Sciatic nerve (tissue), 2 donors: ENCODE measurements at regions of chr18 and their contacts with region 1.

Region 1: GRCh38 chr18:77073336-77074093 is 59.1 kb downstream of the MBP start:
- DNase-seq: no peak
- ATAC-seq: no peak

Region 2: DNA sequence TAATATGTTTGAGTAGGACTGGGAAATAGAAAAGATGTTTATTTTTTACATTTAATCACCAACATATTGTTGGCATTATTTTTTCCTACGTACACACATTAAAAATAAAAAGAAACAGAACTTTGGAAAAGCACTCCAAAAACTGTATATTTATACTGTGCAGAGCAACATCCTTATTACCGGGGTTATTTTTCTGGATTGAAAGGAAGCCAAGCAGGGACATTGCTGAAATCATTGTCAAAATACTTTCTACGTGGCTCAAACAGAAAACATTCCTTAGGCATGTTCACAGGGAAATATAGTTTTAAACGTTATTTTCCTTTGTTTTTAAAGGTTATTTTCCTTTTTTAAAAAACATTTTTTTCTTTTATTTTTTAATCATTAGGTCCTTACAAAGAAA is 1331.0 kb before region 1 on chr18:
- intact Hi-C with region 1: no loop called
- DNase-seq: no peak
- ATAC-seq: no peak

Region 3: DNA sequence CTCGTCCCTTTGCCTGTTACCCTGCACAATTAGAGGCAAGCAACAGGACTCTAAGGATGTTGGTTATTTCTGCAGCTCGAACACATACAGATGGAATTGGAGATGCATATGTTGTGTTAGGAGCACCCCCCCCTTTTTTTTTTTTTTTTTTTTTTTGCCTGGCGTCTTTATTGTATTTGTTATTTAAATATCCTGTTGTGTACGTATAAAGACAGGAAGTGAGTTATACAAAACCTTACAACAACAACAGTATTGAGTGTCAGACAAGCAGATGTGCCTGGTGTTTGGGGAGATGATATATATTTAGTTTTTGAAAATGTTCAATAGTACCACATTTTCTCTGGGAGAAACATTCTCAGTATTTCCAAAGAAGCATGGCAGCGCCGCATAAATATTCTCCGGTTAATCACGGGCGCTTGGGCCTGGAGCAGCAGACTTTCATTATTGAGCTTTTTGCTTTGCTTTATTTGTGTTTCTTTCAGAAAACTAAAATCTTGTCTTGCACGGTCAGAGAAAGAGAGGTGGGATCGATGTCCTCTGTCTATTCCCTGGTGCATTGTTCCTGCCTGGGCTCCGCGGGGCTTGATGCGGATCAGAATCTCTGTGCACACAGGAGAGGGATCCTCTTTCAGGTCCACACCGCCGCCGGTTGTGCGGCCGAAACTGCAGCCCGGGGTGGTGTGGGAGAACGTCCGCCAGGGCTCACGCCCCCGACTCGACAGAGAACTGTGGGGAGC is 555.2 kb before region 1 on chr18:
- intact Hi-C with region 1: no loop called
- DNase-seq: peak; percentile 81
- ATAC-seq: peak; percentile 88

Region 4: DNA sequence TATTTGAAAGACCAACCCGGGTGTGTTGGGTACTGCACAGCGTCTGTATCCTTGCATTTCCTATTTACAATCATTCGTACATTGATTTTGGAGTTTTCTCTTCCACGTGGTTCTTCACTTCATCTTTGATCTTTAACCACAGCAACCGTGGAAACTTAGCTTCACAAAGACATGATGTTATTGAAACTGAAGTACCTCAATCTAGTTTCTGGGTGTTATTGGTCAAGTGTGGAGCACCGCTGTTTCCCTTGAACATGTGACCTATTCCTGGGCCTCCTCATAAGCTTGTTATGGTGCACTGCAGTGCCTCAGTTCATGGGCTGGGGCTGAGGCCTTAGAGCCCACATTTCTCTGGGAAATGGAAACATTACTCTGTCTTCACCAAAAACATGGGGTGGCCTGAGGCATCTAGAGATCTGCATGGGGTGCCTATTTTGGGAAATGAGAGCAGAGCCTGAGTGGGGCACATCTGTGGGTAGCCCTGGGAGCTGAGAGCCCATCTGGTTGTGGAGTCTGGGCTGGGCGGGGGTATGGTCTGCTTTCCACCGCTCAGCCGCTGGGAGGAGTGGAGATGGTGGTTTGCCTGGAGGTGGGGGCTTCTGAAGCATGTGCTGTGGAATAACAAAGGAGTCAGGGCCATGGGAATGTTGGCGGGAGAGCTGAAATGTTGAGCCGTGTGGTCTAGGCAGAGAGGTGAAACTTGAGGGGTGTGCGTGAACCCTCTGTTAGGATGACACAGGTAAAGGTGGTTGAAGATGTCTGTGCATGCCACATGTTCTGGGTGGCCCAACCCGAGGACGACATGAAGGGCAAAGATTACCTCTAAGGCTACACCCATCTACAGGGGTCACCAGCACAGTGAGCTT is 213.8 kb before region 1 on chr18:
- intact Hi-C with region 1: no loop called
- DNase-seq: no peak
- ATAC-seq: peak; percentile 36

Region 5: GRCh38 chr18:77135339-77136075 is 62.0 kb after region 1 on chr18:
- intact Hi-C with region 1: loop called (anchors 2 kb)
- DNase-seq: no peak
- ATAC-seq: no peak